IMR-90 (cell line): ENCODE measurements at regions of chr2 and their contacts with region 1.

Region 1: DNA sequence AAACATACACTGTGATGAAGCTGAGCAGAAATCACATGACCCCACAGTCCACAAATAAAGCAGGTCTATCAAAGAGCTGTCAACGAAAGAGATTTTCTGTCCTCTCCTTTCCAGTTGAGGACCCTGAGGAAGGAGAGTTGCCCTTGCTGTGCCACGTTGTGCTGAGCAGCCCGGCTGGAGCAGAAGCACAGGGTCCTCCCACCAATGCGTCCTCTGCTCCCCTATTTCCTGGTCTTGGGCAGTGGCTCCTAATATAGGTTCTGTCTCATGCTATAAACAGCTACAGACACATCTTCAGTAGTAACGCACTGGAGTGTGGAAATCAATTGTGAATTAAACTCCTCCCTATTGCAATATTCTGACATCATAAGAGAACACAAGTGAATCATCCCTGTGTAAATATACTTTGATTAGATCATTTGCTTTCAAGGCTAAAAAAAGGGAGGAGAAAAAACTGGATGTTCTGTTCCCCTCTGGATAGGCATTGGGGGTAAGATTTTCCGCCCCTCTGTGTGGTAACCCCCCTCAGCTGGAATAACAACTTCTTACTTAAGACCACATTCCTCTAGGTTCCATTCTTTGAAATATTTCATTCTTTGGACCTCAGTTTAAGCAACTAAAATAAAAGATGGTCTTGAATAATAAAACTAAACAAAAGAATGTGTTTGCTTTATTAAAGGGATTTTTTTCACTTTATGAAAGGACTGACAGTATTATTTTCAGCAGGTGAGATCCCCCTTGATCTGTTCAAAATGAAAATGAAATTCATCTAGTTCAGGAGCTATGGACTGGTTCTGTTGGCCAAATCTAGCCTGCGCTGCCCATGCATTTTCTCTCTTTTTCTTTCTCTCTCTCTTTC is 8.3 kb upstream of the RHOB start:
- DNase-seq: peak; percentile 94
- ATAC-seq: peak; percentile 79
- H3K4me3 ChIP-seq: no peak overlapping the region
- H3K27ac ChIP-seq: peak overlapping the region; percentile 26
- H3K4me1 ChIP-seq: peaks cover 5% of the 10 kb centered on the region
- H3K27me3 ChIP-seq: no peaks in the 10 kb centered on the region
- CTCF ChIP-seq: no peak
- POLR2A ChIP-seq: no peak; the same call in 1 of the 2 replicates
- RAD21 ChIP-seq: 0 out of 2 replicates have a peak, but pooled peaks have one; percentile 10

Region 2: GRCh38 chr2:20378792-20379519 is 59.6 kb before region 1 on chr2:
- CTCF ChIA-PET with region 1: interaction called, 3 read pairs
- POLR2A ChIA-PET with region 1: no interaction called
- dilution Hi-C with region 1: no loop called
- in situ Hi-C with region 1: no loop called
- intact Hi-C with region 1: loop called (anchors 2 kb)
- DNase-seq: peak; percentile 86
- ATAC-seq: peak; percentile 97
- H3K4me3 ChIP-seq: no peak overlapping the region
- H3K27ac ChIP-seq: peak overlapping the region; percentile 46; the same call in 1 of the 2 replicates
- H3K4me1 ChIP-seq: peaks cover 19% of the 10 kb centered on the region
- H3K27me3 ChIP-seq: no peaks in the 10 kb centered on the region
- CTCF ChIP-seq: peak; percentile 92
- POLR2A ChIP-seq: 0 out of 2 replicates have a peak, but pooled peaks have one; percentile 36
- RAD21 ChIP-seq: peak; percentile 88

Region 3: GRCh38 chr2:20398956-20399567 is 39.5 kb before region 1 on chr2:
- CTCF ChIA-PET with region 1: no interaction called
- POLR2A ChIA-PET with region 1: interaction called, 14 read pairs
- dilution Hi-C with region 1: no loop called
- in situ Hi-C with region 1: no loop called
- intact Hi-C with region 1: loop called (anchors 5 kb)
- DNase-seq: peak; percentile 68
- ATAC-seq: peak; percentile 63
- H3K4me3 ChIP-seq: no peak overlapping the region
- H3K27ac ChIP-seq: no peak overlapping the region
- H3K4me1 ChIP-seq: peaks cover 4% of the 10 kb centered on the region
- H3K27me3 ChIP-seq: peaks cover 7% of the 10 kb centered on the region; the same call in 1 of the 2 replicates
- CTCF ChIP-seq: no peak
- POLR2A ChIP-seq: no peak
- RAD21 ChIP-seq: no peak

Region 4: DNA sequence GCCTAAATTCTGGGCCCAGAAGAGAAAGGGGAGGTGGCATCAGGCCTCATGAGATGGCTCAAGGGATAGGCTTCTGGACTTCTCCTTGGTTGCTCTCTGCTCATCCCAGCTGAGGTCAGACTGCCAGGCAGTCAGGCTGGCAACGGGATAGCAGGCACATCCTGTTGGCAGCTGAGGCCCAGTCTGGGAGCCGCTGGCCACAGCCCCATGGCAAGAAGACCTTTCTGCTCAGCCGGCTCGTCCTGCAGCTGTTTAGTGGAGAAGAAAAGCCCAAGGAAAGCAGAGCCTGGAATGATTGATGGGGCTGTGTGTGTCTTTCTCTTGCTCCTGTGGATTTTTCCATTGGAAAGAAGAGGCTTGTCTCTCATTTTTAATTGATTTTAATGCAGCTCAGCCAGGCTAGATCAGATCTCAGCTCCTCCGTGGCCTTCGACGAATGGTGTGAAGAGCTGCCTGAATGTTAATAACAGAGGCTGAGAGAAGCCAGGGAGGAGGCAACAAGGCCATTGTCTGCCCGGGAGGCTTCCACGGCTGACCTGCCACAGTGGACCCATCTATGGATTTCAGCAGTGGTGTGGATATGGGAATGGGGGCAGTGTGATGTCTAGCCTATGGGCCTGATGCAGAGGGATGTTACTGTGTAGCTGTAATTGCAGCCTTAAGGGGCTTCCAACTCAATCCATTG is 112.8 kb after region 1 on chr2:
- CTCF ChIA-PET with region 1: no interaction called
- POLR2A ChIA-PET with region 1: no interaction called
- dilution Hi-C with region 1: no loop called
- in situ Hi-C with region 1: no loop called
- intact Hi-C with region 1: no loop called
- DNase-seq: no peak
- ATAC-seq: peak; percentile 42; the same call in 1 of the 2 replicates
- H3K4me3 ChIP-seq: no peak overlapping the region
- H3K27ac ChIP-seq: no peak overlapping the region
- H3K4me1 ChIP-seq: peaks cover 5% of the 10 kb centered on the region
- H3K27me3 ChIP-seq: peaks cover 5% of the 10 kb centered on the region; the same call in 1 of the 2 replicates
- CTCF ChIP-seq: no peak
- POLR2A ChIP-seq: no peak
- RAD21 ChIP-seq: no peak